ENCODE measurements at regions of chr17 and their contacts with region 1.

Region 1: GRCh38 chr17:78013683-78014467 is 55.4 kb downstream of the TNRC6C start:
- DNase-seq: peak; percentile 71
- H3K4me3 ChIP-seq: no peak overlapping the region
- H3K27ac ChIP-seq: peak overlapping the region in 1 of 2 experiments; percentile 50; a peak in 2 of 4 replicates
- H3K4me1 ChIP-seq: peaks cover 0 to 8% of the 10 kb centered on the region in 2 experiments; a peak in 1 of 4 replicates
- H3K27me3 ChIP-seq: no peaks in the 10 kb centered on the region
- CTCF ChIP-seq: peak; percentile 99
- EP300 ChIP-seq: no peak
- RAD21 ChIP-seq: peak; percentile 97

Region 2: DNA sequence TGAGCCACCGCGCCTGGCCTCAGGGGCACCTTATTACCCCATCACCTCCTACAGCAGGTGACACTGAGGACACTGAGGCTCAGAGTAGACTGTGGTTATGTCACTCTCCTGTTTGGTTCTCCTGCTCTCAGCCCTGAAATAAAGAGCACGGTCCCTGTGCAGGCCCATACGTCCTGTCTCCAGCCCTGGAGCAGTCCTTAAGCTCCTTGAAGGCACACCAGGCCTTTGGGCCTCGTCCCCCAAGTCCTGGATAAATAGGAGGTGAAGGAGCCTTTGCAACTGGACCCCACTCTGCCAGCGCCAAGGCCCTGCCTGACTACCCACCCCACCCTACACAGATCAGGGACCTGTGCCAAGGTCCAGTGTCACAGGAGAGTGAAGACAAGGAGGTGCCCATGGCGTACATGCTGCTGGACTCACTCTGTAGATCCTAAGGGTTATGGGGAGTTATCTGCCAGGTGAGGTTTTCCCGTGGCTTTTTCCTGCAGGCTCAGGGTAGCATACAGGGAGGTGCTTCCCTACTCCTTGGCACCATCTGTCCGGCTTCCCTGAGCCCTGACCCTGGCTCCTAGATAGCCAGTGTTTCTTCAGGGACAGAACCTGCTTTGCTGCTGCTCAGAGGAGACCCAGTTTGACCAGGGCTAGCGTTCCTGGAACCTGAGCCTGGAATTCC is 619.9 kb before region 1 on chr17:
- CTCF ChIA-PET with region 1: no interaction called
- POLR2A ChIA-PET with region 1: no interaction called
- DNase-seq: no peak
- H3K4me3 ChIP-seq: no peak overlapping the region
- H3K27ac ChIP-seq: peak overlapping the region in 1 of 2 experiments; percentile 63; a peak in 1 of 4 replicates
- H3K4me1 ChIP-seq: peaks cover 48 to 65% of the 10 kb centered on the region in 2 experiments
- H3K27me3 ChIP-seq: no peaks in the 10 kb centered on the region
- CTCF ChIP-seq: no peak
- EP300 ChIP-seq: no peak
- RAD21 ChIP-seq: no peak

Region 3: DNA sequence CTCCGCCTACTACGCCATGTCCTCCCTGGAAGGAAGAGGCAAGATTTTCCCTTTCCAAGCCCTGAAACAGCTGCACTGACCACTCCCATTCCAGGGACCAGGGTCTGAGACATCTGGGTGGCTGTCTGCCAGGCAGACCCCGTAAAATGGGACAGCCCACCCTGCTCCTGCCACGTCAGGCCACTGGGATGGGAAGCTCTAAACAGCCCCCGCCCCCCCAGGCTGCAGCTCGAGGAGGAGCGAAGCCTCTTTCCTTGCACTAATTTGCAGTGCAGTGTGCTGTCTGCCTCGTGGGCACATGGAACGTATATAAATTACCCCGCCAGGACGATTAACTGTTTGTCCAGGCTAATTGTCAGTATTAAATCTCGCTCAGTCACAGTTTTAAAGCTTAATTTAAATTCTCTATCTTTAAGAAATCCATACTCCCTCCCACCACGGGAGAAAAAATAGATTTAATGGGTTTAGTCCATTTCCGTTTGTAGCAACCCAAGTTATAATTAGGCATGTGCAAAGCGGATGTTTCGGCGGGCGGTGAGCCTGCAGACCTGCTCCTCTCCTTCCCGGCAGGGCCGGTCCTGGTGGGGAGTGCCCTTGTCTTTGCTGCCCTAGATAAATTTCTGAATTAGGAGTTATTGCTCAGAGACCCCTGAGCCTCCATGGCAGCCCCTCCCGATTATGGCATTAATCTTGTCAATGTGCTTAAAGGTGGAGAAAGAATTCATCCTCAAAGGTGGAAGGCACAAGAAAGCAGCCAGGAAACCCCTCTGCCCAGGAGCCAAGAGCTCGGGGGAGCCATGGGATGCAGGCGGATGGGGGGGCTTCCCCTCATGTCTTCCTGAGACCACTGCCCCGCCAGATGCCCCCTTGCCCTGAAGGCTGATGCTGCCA is 323.4 kb before region 1 on chr17:
- CTCF ChIA-PET with region 1: interaction called, 23 read pairs
- POLR2A ChIA-PET with region 1: no interaction called
- DNase-seq: peak; percentile 88
- H3K4me3 ChIP-seq: peak overlapping the region in 1 of 2 experiments; percentile 12; a peak in 1 of 4 replicates
- H3K27ac ChIP-seq: peak overlapping the region in 1 of 2 experiments; percentile 93; a peak in 2 of 4 replicates
- H3K4me1 ChIP-seq: peaks cover 0 to 33% of the 10 kb centered on the region in 2 experiments; a peak in 1 of 4 replicates
- H3K27me3 ChIP-seq: peaks cover 48% of the 10 kb centered on the region; the same call in 1 of the 2 replicates
- CTCF ChIP-seq: no peak
- EP300 ChIP-seq: peak in 1 of 2 experiments; percentile 75; a peak in 2 of 4 replicates
- RAD21 ChIP-seq: peak; percentile 8; the same call in 1 of the 2 replicates

Region 4: DNA sequence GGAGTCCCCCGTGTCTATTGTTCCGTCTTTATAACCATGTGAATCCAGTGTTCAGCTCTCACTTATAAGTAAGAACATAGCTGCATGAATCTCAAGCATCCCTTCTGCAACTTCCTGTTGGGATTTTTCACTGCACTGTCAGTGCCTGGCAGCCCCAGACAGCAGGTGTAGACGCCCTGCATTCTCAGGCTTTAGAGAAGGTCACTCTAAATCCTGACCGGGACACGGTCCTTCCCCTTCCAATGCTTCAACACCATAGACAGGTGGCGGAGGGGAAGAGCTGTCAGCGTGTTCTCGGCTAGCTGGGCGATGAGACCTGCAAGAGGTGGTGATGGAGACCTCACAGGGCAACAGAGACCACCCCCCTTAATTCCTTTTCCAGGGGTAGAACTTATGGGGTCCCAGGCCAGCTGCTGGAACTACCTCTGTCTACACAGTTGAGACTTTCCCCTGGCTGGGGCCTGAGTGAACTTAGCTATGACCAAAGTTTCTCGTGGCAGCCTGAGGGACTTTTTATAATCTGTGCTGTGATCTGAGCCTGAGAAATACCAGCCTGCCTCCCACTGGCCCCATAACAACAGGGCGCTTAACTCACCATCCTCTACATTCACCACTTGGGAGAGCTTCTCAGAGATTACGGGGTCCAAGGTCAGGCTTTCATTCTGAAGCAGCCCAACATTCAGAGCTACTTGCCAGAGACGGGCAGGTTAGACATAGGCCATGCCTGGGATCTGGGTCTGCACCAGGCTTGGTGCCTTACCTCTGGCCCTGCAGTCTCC is 198.6 kb before region 1 on chr17:
- CTCF ChIA-PET with region 1: interaction called, 18 read pairs
- POLR2A ChIA-PET with region 1: no interaction called
- DNase-seq: peak; percentile 63
- H3K4me3 ChIP-seq: no peak overlapping the region
- H3K27ac ChIP-seq: no peak overlapping the region
- H3K4me1 ChIP-seq: peaks cover 5 to 14% of the 10 kb centered on the region in 2 experiments; a peak in 2 of 4 replicates
- H3K27me3 ChIP-seq: no peaks in the 10 kb centered on the region
- CTCF ChIP-seq: no peak
- EP300 ChIP-seq: no peak
- RAD21 ChIP-seq: peak; percentile 76

Region 5: GRCh38 chr17:77914385-77915254 is 99.3 kb before region 1 on chr17:
- CTCF ChIA-PET with region 1: interaction called, 20 read pairs
- POLR2A ChIA-PET with region 1: no interaction called
- DNase-seq: no peak
- H3K4me3 ChIP-seq: no peak overlapping the region
- H3K27ac ChIP-seq: no peak overlapping the region
- H3K4me1 ChIP-seq: peaks cover 0 to 21% of the 10 kb centered on the region in 2 experiments; a peak in 2 of 4 replicates
- H3K27me3 ChIP-seq: peaks cover 41% of the 10 kb centered on the region
- CTCF ChIP-seq: no peak
- EP300 ChIP-seq: no peak
- RAD21 ChIP-seq: peak; percentile 35

Region 6: DNA sequence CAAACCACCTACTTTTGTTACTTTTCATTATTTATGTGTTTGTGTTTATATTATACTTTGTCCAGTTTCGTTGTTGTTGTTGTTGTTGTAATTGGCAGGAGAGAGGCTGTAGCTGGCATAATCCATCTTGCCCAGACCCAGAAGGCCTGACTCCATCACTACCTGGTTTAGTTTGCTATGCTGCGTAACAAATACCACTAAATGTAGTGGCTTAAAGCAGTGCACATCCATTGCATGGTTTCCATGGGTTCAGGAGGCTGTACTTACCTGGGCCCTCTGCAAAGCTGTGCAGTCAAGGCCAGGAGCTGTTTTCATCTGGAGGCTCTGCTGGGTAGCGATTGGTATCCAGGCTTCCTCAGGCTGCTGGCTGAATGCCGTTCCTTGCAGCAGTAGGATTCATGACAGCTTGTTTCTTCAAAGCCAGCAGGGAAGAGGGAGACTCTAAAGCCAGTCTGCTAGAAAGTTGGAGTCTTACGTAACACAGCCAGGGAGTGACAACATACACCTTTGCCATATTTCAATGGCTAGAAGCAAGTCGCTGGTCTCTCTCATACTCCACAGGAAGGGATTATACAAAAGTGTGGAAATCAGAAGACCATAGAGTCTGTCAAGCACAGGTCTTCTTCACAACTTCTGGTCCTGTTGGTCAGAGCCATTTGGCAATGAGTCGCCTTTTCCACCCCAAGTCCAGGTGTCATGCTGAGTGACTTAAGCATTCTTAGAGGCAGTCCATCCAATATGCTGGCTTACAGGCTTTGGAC is 14.3 kb before region 1 on chr17:
- CTCF ChIA-PET with region 1: interaction called, 126 read pairs
- POLR2A ChIA-PET with region 1: no interaction called
- DNase-seq: no peak
- H3K4me3 ChIP-seq: no peak overlapping the region
- H3K27ac ChIP-seq: peak overlapping the region; percentile 61 to 69; a peak in 3 of 4 replicates
- H3K4me1 ChIP-seq: peaks cover 21 to 44% of the 10 kb centered on the region in 2 experiments
- H3K27me3 ChIP-seq: no peaks in the 10 kb centered on the region
- CTCF ChIP-seq: no peak
- EP300 ChIP-seq: no peak
- RAD21 ChIP-seq: no peak

Region 7: GRCh38 chr17:78040440-78041385 is 26.8 kb after region 1 on chr17:
- CTCF ChIA-PET with region 1: interaction called, 49 read pairs
- POLR2A ChIA-PET with region 1: interaction called, 3 read pairs
- DNase-seq: peak; percentile 95
- H3K4me3 ChIP-seq: peak overlapping the region; percentile 72 to 75
- H3K27ac ChIP-seq: peak overlapping the region; percentile 89 to 100
- H3K4me1 ChIP-seq: peaks cover 7 to 41% of the 10 kb centered on the region in 2 experiments; a peak in 2 of 4 replicates
- H3K27me3 ChIP-seq: no peaks in the 10 kb centered on the region
- CTCF ChIP-seq: peak; percentile 40
- EP300 ChIP-seq: peak in 1 of 2 experiments; percentile 77; a peak in 2 of 4 replicates
- RAD21 ChIP-seq: peak; percentile 9; the same call in 1 of the 2 replicates